Ascending aorta (tissue), 2 donors: ENCODE measurements at regions of chr2 and their contacts with region 1.

Region 1: GRCh38 chr2:158968396-158969161 is at the start of gene TANC1:
- DNase-seq: peak; percentile 77 to 97
- H3K4me3 ChIP-seq: peak within 1 kb of the TSS; percentile 92 to 98
- H3K27ac ChIP-seq: peak within 1 kb of the TSS; percentile 86 to 93
- H3K4me1 ChIP-seq: peaks cover 3 to 20% of the 10 kb centered on the region in 2 donors
- H3K27me3 ChIP-seq: no peaks in the 10 kb centered on the region
- CTCF ChIP-seq: no peak
- total RNA-seq, gene TANC1: 45.4 TPM

Region 2: GRCh38 chr2:158903711-158904443 is 64.7 kb before region 1 on chr2:
- intact Hi-C with region 1: loop called (anchors 5 kb)
- DNase-seq: no peak
- H3K4me3 ChIP-seq: no peak overlapping the region
- H3K27ac ChIP-seq: no peak overlapping the region
- H3K4me1 ChIP-seq: no peaks in the 10 kb centered on the region
- H3K27me3 ChIP-seq: no peaks in the 10 kb centered on the region
- CTCF ChIP-seq: no peak

Region 3: GRCh38 chr2:158998551-158999248 is 30.1 kb after region 1 on chr2:
- intact Hi-C with region 1: loop called (anchors 2 kb)
- DNase-seq: peak in 1 of 2 donors; percentile 70
- H3K4me3 ChIP-seq: no peak overlapping the region
- H3K27ac ChIP-seq: peak overlapping the region; percentile 44 to 50
- H3K4me1 ChIP-seq: peaks cover 5 to 26% of the 10 kb centered on the region in 2 donors
- H3K27me3 ChIP-seq: no peaks in the 10 kb centered on the region
- CTCF ChIP-seq: no peak

Region 4: DNA sequence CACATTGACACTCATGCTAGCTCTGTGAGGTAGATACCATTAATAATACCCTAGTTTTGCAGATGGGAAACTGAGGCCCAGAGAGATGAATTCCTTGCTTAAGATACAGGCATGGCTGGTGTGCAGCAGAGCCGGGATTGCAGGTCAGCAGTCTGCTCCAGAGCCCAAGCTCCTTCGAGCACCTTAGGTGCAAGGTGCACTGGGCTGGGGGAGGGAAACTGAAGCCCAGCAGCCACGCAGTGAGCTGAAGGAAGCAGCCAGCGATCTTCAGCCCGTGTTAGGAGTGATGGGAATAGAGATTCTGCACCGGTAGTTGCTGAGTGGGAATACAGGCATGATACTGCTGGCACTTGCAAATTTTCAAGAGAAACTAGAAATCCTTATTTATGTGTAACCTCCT is 50.4 kb after region 1 on chr2:
- intact Hi-C with region 1: no loop called
- DNase-seq: no peak
- H3K4me3 ChIP-seq: no peak overlapping the region
- H3K27ac ChIP-seq: no peak overlapping the region
- H3K4me1 ChIP-seq: no peaks in the 10 kb centered on the region
- H3K27me3 ChIP-seq: no peaks in the 10 kb centered on the region
- CTCF ChIP-seq: no peak

Region 5: DNA sequence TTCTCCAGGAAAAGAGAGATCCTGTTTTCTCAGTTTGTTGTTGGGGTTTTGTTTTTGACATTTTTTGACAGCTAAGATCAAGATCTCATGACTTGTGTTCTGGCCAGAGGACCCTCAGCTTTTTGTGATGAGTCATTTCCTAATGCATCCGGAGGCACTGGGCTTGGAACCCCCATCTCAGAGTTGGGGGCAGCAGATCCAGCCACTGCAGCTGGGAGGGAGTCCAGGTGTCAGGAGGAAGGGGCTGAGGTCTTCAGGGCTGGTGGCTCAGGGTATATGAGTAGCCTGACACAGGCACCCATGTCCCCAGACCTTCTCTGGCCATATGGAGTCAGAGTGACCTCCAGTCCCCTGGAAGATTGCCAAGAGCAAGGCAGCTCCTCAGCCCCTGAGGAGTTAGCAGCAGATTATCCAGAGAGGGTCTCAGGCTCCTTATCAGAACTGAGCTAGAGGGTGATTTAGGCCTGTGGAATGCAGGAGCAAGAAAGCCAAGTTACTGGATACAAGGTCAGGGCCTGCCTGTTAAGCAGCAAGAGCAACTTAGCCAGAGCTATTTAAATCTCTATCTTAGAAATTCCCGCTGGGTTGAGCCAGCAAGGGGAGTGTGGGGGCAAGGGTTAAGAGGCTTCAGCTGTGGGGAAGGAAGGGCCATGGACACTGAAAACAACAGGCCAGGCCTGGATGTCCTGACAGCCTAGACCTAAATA is 62.2 kb after region 1 on chr2:
- intact Hi-C with region 1: loop called (anchors 2 kb)
- DNase-seq: peak in 1 of 2 donors; percentile 77
- H3K4me3 ChIP-seq: no peak overlapping the region
- H3K27ac ChIP-seq: peak overlapping the region; percentile 82 to 85
- H3K4me1 ChIP-seq: peaks cover 11 to 49% of the 10 kb centered on the region in 2 donors
- H3K27me3 ChIP-seq: no peaks in the 10 kb centered on the region
- CTCF ChIP-seq: no peak

Region 6: DNA sequence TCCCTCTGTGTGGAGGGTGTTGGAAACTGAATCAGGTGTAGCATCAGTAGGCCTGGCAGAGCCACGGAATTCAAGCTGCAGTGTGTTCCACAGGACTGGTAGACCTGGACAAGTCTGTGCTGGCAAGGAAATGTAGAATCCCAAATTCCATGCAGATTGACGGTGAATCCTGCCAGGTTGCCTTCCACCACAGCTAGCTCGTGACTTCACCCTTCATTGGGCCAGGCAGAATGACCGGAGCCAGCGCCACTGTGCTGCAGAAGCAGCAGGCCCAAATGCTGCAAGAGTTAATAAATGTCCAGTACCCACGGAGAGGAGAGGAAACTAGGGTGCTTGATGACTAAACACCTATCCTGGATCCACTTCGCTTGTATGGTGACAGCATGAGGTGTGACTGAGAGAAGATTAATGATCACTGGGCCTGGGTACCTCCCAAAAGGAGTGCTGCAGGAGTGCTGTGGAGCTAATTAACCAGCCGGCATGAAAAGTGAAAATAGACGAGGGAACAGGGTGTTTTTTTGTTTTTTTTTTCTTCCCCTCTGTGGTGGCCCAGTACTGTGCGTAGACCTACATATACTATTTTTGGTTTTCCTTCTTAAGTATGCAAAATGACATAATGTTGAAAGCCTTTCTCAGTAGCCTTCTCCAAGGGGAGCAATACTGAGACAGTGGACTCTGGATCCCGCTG is 122.1 kb after region 1 on chr2:
- intact Hi-C with region 1: loop called (anchors 2 kb)
- DNase-seq: no peak
- H3K4me3 ChIP-seq: peak overlapping the region; percentile 2 to 8
- H3K27ac ChIP-seq: peak overlapping the region; percentile 77 to 86
- H3K4me1 ChIP-seq: peaks cover 23 to 83% of the 10 kb centered on the region in 2 donors
- H3K27me3 ChIP-seq: no peaks in the 10 kb centered on the region
- CTCF ChIP-seq: no peak

Region 7: GRCh38 chr2:159615140-159615951 is 646.8 kb after region 1 on chr2:
- intact Hi-C with region 1: loop called (anchors 10 kb)
- DNase-seq: peak; percentile 52 to 90
- H3K4me3 ChIP-seq: peak overlapping the region; percentile 77 to 81
- H3K27ac ChIP-seq: peak overlapping the region; percentile 94 to 97
- H3K4me1 ChIP-seq: peaks cover 2 to 15% of the 10 kb centered on the region in 2 donors
- H3K27me3 ChIP-seq: no peaks in the 10 kb centered on the region
- CTCF ChIP-seq: no peak